CD8-positive, alpha-beta memory T cell (primary cell): ENCODE measurements at regions of chr1 and their contacts with region 1.

Region 1: DNA sequence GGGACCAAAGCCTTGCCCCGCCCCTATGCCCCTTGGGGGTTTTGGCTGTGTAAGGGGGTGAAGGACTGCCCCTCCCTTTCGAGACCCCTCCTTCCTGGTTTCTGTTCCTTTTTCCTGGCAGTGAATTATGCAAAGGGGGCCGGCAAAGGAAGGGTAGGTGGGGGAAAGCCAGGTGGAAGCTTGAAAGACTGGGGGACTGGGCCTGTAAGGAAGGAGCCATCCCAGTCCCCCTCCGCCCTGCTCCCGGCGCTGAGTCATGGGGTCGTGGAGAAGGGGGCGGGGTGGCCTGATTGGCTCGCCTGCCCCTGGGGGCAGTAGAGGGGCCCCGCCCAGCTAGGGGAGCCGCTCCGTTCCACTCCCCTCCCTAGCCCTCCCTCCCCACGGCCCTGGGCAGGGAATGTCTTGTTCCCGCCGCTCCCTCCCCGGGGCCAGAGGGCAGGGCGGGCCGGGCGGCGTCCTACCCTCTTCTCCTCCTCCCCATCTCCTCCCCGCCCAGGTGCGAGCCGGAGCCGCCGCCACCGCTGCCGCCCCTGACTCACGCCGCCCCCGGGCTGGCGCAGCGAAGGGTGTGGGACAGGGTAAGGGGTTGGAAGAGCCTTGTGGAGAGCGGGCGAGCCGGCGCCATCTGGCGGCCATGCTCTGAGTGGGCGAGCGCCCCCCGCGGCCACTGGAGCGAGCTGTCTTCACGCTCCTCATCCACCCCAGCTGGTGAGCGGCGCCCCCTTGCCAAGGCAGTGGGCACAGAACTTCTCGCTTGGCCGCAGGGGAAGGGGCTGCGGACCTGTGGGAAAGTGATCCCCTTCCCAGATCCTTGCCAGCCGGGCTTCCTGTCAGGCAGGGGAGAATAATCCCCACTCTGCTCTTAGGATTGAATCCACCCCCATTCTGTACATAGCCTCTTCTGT is 14.7 kb downstream of the ZBTB7B start:
- DNase-seq: peak; percentile 82 to 91 (median 84)
- H3K4me3 ChIP-seq: no peak overlapping the region
- H3K4me3 Mint-ChIP-seq: peak overlapping the region; percentile 37 to 68 (median 57)
- H3K27ac ChIP-seq: peak overlapping the region; percentile 57
- H3K27ac Mint-ChIP-seq: peak overlapping the region in 6 of 8 donors; percentile 63 to 95 (median 74)
- H3K4me1 ChIP-seq: peaks cover 63% of the 10 kb centered on the region
- H3K4me1 Mint-ChIP-seq: peaks cover 42 to 53% (median 52%) of the 10 kb centered on the region in 3 donors
- H3K27me3 ChIP-seq: no peaks in the 10 kb centered on the region
- H3K27me3 Mint-ChIP-seq: no peaks in the 10 kb centered on the region

Region 2: DNA sequence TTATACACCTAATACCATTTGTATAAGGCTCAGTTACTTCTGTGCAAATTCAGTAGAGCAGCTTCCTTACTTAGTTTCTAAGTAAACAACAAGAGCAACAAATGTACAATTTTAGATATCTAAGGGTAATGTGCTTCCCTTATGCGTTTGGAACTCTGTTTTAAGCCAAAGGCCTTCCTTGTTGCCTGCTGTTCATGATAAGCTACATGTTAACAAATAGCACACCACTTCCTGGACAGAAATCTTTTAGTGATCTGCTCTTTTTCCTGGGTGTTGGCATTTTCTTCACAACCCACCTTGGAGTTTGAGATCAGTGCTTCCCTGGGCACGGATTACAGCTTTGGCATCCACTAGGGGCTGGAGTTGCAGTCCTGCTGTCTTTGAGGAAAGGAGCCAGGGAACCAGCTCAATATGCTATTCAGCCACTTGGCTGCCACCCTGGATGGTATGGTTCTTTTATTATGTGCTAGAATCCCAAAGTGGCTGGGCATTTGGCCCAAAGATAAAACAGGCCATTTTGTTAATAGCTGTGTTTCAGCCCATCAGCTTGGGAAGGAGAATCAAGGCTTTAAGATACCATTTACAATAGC is 353.7 kb before region 1 on chr1:
- CTCF ChIA-PET with region 1: no interaction called
- POLR2A ChIA-PET with region 1: no interaction called
- DNase-seq: no peak
- H3K4me3 ChIP-seq: no peak overlapping the region
- H3K4me3 Mint-ChIP-seq: no peak overlapping the region
- H3K27ac ChIP-seq: no peak overlapping the region
- H3K27ac Mint-ChIP-seq: no peak overlapping the region
- H3K4me1 ChIP-seq: no peaks in the 10 kb centered on the region
- H3K4me1 Mint-ChIP-seq: no peaks in the 10 kb centered on the region
- H3K27me3 ChIP-seq: peaks cover 12% of the 10 kb centered on the region
- H3K27me3 Mint-ChIP-seq: peaks cover 4 to 31% of the 10 kb centered on the region in 2 donors

Region 3: DNA sequence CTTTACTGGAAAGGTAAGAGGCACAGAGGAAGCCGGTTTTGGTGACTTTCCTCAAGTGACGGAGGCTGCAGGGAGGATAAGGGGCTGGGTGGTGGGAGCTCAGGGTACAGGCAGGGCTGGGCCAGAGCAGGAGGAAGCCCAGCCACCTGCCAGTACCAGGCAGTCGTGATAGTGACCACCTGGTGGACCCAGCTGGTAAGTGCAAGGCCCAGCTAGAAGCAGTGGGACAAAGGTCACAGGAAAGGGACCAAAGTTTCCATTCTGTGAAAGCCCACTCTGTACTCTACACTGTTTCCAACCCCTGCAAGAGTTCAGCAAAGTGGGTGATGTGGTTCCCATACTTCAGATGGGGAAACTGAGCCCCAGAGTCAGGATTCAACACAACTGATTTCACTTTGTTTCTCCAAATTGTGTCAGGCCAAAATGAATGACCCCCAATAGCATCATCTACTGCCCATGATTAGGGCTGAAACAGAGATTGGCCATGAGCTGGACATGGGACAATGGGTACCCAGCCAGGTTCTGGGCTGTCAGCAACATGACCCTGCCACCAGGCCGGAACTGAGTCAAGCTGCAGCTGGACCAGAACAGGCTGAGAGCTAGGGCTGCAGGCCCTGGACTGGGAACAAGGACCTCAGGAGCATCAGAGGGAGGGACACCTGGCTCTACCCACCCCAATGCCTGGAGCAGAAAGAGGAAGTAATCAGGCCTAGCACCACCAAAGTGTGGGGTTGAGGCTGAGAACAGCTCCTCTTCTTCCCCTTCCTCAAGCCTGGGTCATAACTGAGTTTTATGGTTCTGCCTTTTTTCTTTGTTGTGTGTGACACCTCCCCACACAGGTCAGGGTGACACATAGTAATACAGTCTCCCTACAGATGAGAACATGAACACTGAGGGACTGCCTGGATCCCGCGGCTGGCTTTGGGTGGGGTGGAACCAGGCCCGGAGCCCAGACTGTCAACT is 197.4 kb before region 1 on chr1:
- CTCF ChIA-PET with region 1: no interaction called
- POLR2A ChIA-PET with region 1: no interaction called
- DNase-seq: peak in 2 of 5 donors; percentile 5 to 33
- H3K4me3 ChIP-seq: no peak overlapping the region
- H3K4me3 Mint-ChIP-seq: no peak overlapping the region
- H3K27ac ChIP-seq: no peak overlapping the region
- H3K27ac Mint-ChIP-seq: peak overlapping the region in 3 of 8 donors; percentile 12 to 53 (median 47)
- H3K4me1 ChIP-seq: no peaks in the 10 kb centered on the region
- H3K4me1 Mint-ChIP-seq: peaks cover 6 to 12% (median 10%) of the 10 kb centered on the region in 3 donors
- H3K27me3 ChIP-seq: no peaks in the 10 kb centered on the region
- H3K27me3 Mint-ChIP-seq: no peaks in the 10 kb centered on the region

Region 4: DNA sequence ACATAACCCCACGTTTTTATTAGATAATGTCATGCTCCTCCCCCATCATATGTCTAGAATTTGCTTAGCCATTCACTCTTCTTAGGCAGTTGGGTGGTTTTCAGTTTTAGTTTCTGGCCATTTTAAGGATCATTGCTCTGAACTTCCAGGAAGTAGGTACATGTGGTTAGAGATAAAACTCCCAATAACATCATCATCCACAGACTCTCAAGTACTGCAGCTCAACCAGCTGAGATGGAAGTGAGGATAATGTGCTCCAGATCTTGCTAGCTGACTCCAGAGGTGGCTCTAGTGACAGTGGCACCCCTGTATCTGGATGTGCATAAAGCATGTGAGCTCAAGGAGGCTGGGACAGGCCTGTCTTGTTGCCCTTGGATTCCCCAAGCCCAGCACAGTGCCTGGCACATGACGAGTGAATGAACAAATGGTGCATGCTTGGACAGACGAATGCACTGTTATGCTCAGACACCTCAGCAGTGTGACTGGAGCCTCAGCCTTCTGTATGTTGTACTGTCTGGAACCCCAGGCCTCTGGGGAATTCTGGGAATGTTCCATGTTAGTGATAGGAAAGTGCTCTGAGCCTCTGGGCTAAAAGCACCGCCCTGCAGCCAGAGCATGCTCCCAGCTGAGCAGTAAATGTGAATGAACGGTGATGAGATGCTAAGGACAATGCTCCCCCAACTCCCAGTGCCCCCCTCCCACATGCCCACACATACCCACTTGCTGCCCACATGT is 130.8 kb before region 1 on chr1:
- CTCF ChIA-PET with region 1: no interaction called
- POLR2A ChIA-PET with region 1: no interaction called
- DNase-seq: no peak
- H3K4me3 ChIP-seq: no peak overlapping the region
- H3K4me3 Mint-ChIP-seq: no peak overlapping the region
- H3K27ac ChIP-seq: no peak overlapping the region
- H3K27ac Mint-ChIP-seq: no peak overlapping the region
- H3K4me1 ChIP-seq: no peaks in the 10 kb centered on the region
- H3K4me1 Mint-ChIP-seq: no peaks in the 10 kb centered on the region
- H3K27me3 ChIP-seq: no peaks in the 10 kb centered on the region
- H3K27me3 Mint-ChIP-seq: peaks cover 0 to 2% of the 10 kb centered on the region in 2 donors

Region 5: GRCh38 chr1:154936555-154937084 is 80.7 kb before region 1 on chr1 and contains the start of gene PMVK:
- CTCF ChIA-PET with region 1: interaction called, 30 read pairs
- POLR2A ChIA-PET with region 1: no interaction called
- DNase-seq: peak; percentile 92 to 98 (median 97)
- H3K4me3 ChIP-seq: peak within 1 kb of the TSS; percentile 77
- H3K4me3 Mint-ChIP-seq: peak within 1 kb of the TSS; percentile 94 to 100 (median 98)
- H3K27ac ChIP-seq: peak within 1 kb of the TSS; percentile 97
- H3K27ac Mint-ChIP-seq: peak within 1 kb of the TSS; percentile 99 to 100 (median 99)
- H3K4me1 ChIP-seq: peaks cover 44% of the 10 kb centered on the region
- H3K4me1 Mint-ChIP-seq: peaks cover 47 to 66% (median 57%) of the 10 kb centered on the region in 3 donors
- H3K27me3 ChIP-seq: no peaks in the 10 kb centered on the region
- H3K27me3 Mint-ChIP-seq: no peaks in the 10 kb centered on the region
- total RNA-seq, gene PMVK: 44.7 to 45.2 TPM

Region 6: GRCh38 chr1:154961497-154962262 is 55.6 kb before region 1 on chr1 and contains the start of gene PYGO2:
- CTCF ChIA-PET with region 1: interaction called, 65 read pairs
- POLR2A ChIA-PET with region 1: interaction called, 4 read pairs
- DNase-seq: peak; percentile 74 to 86 (median 82)
- H3K4me3 ChIP-seq: peak within 1 kb of the TSS; percentile 64
- H3K4me3 Mint-ChIP-seq: peak within 1 kb of the TSS; percentile 92 to 98 (median 96)
- H3K27ac ChIP-seq: peak within 1 kb of the TSS; percentile 92
- H3K27ac Mint-ChIP-seq: peak within 1 kb of the TSS; percentile 94 to 99 (median 98)
- H3K4me1 ChIP-seq: peaks cover 28% of the 10 kb centered on the region
- H3K4me1 Mint-ChIP-seq: peaks cover 29 to 57% (median 47%) of the 10 kb centered on the region in 3 donors
- H3K27me3 ChIP-seq: no peaks in the 10 kb centered on the region
- H3K27me3 Mint-ChIP-seq: peaks cover 0 to 1% of the 10 kb centered on the region in 2 donors
- total RNA-seq, gene PYGO2: 34.2 to 35.3 TPM

Region 7: GRCh38 chr1:154982897-154983648 is 34.2 kb before region 1 on chr1 and contains the start of gene FLAD1:
- CTCF ChIA-PET with region 1: interaction called, 54 read pairs
- POLR2A ChIA-PET with region 1: no interaction called
- DNase-seq: peak; percentile 92 to 97 (median 96)
- H3K4me3 ChIP-seq: peak within 1 kb of the TSS; percentile 78
- H3K4me3 Mint-ChIP-seq: no peak within 1 kb of the TSS
- H3K27ac ChIP-seq: peak within 1 kb of the TSS; percentile 76
- H3K27ac Mint-ChIP-seq: peak within 1 kb of the TSS in 3 of 8 donors; percentile 61 to 95 (median 62)
- H3K4me1 ChIP-seq: peaks cover 15% of the 10 kb centered on the region
- H3K4me1 Mint-ChIP-seq: peaks cover 0 to 9% (median 2%) of the 10 kb centered on the region in 3 donors
- H3K27me3 ChIP-seq: no peaks in the 10 kb centered on the region
- H3K27me3 Mint-ChIP-seq: no peaks in the 10 kb centered on the region
- total RNA-seq, gene FLAD1: 73.7 to 76.3 TPM

Region 8: GRCh38 chr1:155001675-155002463 is 15.4 kb before region 1 on chr1:
- CTCF ChIA-PET with region 1: interaction called, 207 read pairs
- POLR2A ChIA-PET with region 1: interaction called, 7 read pairs
- DNase-seq: peak; percentile 91 to 98 (median 96)
- H3K4me3 ChIP-seq: peak overlapping the region; percentile 95
- H3K4me3 Mint-ChIP-seq: peak overlapping the region; percentile 93 to 97 (median 95)
- H3K27ac ChIP-seq: peak overlapping the region; percentile 90
- H3K27ac Mint-ChIP-seq: peak overlapping the region; percentile 90 to 98 (median 94)
- H3K4me1 ChIP-seq: peaks cover 42% of the 10 kb centered on the region
- H3K4me1 Mint-ChIP-seq: peaks cover 47 to 58% (median 54%) of the 10 kb centered on the region in 3 donors
- H3K27me3 ChIP-seq: no peaks in the 10 kb centered on the region
- H3K27me3 Mint-ChIP-seq: no peaks in the 10 kb centered on the region

Region 9: GRCh38 chr1:155057788-155058211 is 40.5 kb after region 1 on chr1:
- CTCF ChIA-PET with region 1: interaction called, 21 read pairs
- POLR2A ChIA-PET with region 1: no interaction called
- DNase-seq: no peak
- H3K4me3 ChIP-seq: no peak overlapping the region
- H3K4me3 Mint-ChIP-seq: no peak overlapping the region
- H3K27ac ChIP-seq: no peak overlapping the region
- H3K27ac Mint-ChIP-seq: no peak overlapping the region
- H3K4me1 ChIP-seq: peaks cover 24% of the 10 kb centered on the region
- H3K4me1 Mint-ChIP-seq: peaks cover 14 to 22% (median 16%) of the 10 kb centered on the region in 3 donors
- H3K27me3 ChIP-seq: no peaks in the 10 kb centered on the region
- H3K27me3 Mint-ChIP-seq: no peaks in the 10 kb centered on the region